A673 (cell line): ENCODE measurements at regions of chr18 and their contacts with region 1.

Region 1: GRCh38 chr18:67043276-67043675 is 439.4 kb upstream of the CDH19 start:
- DNase-seq: no peak
- H3K4me3 ChIP-seq: no peak overlapping the region
- H3K27ac ChIP-seq: no peak overlapping the region
- H3K4me1 ChIP-seq: no peaks in the 10 kb centered on the region
- H3K27me3 ChIP-seq: no peaks in the 10 kb centered on the region
- CTCF ChIP-seq: no peak

Region 2: GRCh38 chr18:67001052-67001451 is 42.2 kb before region 1 on chr18:
- CTCF ChIA-PET with region 1: no interaction called
- POLR2A ChIA-PET with region 1: no interaction called
- intact Hi-C with region 1: loop called (anchors 1 kb)
- DNase-seq: no peak
- H3K4me3 ChIP-seq: no peak overlapping the region
- H3K27ac ChIP-seq: no peak overlapping the region
- H3K4me1 ChIP-seq: no peaks in the 10 kb centered on the region
- H3K27me3 ChIP-seq: no peaks in the 10 kb centered on the region
- CTCF ChIP-seq: no peak